Activated CD8-positive, alpha-beta memory T cell treated with anti-CD3 and anti-CD28 coated beads, Interleukin-2, amount 10 ng/mL, durations not matched to agents 7 days and 5 days (primary cell): ENCODE measurements at regions of chr16 and their contacts with region 1.

Region 1: GRCh38 chr16:70370924-70371323 is 24.2 kb downstream of the DDX19A start:
- DNase-seq: no peak
- ATAC-seq: no peak
- H3K4me3 Mint-ChIP-seq: no peak overlapping the region
- H3K27ac Mint-ChIP-seq: no peak overlapping the region
- H3K4me1 Mint-ChIP-seq: peaks cover 5% of the 10 kb centered on the region
- H3K27me3 Mint-ChIP-seq: no peaks in the 10 kb centered on the region

Region 2: DNA sequence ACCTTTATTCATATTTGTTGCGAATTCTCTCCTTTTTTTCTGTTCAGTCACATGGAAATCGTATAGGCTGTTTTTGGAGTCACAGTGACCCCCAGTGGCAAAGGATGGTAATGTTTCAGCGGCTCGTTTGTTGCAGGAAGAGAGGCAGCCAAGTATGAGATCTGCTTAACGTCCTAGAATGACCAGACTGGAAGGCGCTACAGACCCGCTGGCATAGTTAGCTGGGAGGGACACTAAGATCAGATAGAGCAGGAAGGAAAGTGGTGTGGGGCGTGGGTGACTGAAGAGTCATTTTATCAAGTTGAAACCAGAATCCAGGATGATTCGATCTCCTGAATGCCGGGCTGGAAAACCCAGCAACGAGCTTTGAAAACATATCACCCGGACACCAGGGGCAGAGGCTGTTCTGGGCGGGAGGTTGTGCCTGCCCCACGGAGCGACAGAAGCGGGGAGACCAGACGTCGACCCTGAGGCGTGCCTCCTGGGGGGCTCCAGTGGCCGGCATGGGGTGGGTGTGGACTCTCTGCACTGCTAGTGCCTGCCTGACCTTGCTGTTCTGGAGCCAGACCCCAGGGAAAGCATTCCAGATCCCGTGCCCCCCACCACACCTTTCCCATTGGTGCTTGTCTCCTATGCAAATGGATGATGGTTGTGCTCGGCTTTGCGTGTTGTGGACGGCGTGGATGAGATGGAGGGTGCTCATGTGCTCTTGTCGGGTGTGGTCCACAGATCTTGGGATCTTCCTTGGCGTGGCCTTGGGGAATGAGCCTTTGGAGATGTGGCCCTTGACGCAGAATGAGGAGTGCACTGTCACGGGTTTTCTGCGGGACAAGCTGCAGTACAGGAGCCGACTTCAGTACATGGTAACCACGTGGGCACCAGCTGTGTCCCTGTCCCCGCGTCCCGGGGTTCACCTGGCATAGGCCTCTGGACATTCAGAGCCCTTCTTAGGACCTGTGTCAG is 283.2 kb after region 1 on chr16:
- CTCF ChIA-PET with region 1: interaction called, 14 read pairs
- DNase-seq: peak; percentile 88
- ATAC-seq: peak; percentile 78
- H3K4me3 Mint-ChIP-seq: peak overlapping the region; percentile 35
- H3K27ac Mint-ChIP-seq: peak overlapping the region; percentile 24
- H3K4me1 Mint-ChIP-seq: peaks cover 8% of the 10 kb centered on the region
- H3K27me3 Mint-ChIP-seq: no peaks in the 10 kb centered on the region